ENCODE measurements at regions of chr5 and their contacts with region 1.

Region 1: DNA sequence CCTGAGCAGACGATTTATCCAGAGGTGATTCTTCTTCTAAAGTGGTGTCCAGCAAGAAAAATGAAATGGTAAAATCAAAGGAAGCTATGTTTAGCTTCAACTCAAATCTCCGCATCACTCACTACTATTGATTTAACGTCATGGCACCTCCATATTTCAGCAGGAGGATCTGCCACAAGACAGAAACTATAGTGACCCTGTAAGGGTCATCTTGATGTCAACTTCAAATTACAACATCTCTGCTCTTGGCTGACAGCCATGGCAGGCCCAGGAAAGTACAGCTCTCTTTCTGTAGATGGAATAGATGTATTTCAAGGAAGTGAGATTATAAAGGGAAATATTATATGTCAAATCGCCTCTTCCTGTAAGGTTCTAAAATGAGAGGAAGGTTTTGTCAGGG is 10.1 kb upstream of the EFNA5 start:
- DNase-seq: no peak
- H3K4me3 ChIP-seq: no peak overlapping the region
- H3K27ac ChIP-seq: no peak overlapping the region
- H3K4me1 ChIP-seq: no peaks in the 10 kb centered on the region
- H3K27me3 ChIP-seq: no peaks in the 10 kb centered on the region
- CTCF ChIP-seq: no peak

Region 2: GRCh38 chr5:107631805-107632362 is 48.9 kb before region 1 on chr5:
- CTCF ChIA-PET with region 1: interaction called, 15 read pairs
- POLR2A ChIA-PET with region 1: no interaction called
- intact Hi-C with region 1: no loop called
- DNase-seq: no peak
- H3K4me3 ChIP-seq: no peak overlapping the region
- H3K27ac ChIP-seq: peak overlapping the region; percentile 14; the same call in 1 of the 2 replicates
- H3K4me1 ChIP-seq: peaks cover 12% of the 10 kb centered on the region; the same call in 1 of the 2 replicates
- H3K27me3 ChIP-seq: no peaks in the 10 kb centered on the region
- CTCF ChIP-seq: no peak

Measured in PC-9 (cell line).